ENCODE measurements at regions of chr3 and their contacts with region 1.

Region 1: DNA sequence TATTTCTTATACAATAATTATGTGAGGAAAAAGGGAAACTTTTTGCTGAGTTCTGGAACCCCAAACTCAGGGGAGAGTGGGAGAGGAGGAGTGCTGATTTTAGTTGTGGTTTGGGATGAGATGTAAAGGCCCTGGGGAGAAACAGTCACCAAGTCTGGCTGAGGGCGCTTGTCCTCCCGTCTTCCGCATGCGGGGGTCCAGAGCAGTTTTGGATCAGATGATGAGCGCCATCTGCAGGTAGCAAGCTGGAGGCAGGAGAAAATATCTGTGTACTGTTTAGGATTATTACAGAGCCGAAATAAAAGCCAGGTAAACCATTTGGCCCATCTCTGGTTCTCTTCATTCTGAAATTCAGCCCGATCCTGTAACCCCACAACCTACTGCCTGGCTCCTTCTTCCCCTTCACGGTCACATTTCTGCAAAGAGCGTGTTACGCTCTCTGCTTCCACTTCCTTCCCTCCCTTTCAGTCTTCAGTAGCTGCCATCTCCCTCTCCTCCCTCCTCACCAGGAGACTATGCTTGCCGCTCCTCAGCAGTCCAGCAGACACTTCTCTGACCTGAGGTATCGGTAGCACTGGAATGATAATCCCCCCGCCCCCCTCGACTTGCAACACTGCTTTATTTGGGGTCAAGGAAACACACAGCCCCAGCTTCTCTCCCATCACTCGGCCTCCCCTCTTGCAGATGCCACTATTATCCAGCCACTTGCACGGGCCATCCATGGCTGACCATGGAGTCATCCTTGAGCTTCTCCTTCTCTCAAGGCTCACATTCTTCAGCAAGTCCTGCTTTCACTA is 1.4 kb upstream of the PARP14 start:
- DNase-seq: peak; percentile 91
- ATAC-seq: peak; percentile 69
- H3K4me3 Mint-ChIP-seq: peak overlapping the region; percentile 95
- H3K27ac Mint-ChIP-seq: peak overlapping the region; percentile 97
- H3K4me1 Mint-ChIP-seq: peaks cover 51% of the 10 kb centered on the region
- H3K27me3 Mint-ChIP-seq: no peaks in the 10 kb centered on the region

Region 2: GRCh38 chr3:122383771-122384697 is 295.2 kb before region 1 on chr3 and contains the start of gene FAM162A:
- CTCF ChIA-PET with region 1: interaction called, 6 read pairs
- POLR2A ChIA-PET with region 1: no interaction called
- intact Hi-C with region 1: loop called (anchors 2 kb)
- DNase-seq: peak; percentile 97
- ATAC-seq: peak; percentile 91
- H3K4me3 Mint-ChIP-seq: peak within 1 kb of the TSS; percentile 92
- H3K27ac Mint-ChIP-seq: peak within 1 kb of the TSS; percentile 98
- H3K4me1 Mint-ChIP-seq: peaks cover 66% of the 10 kb centered on the region
- H3K27me3 Mint-ChIP-seq: no peaks in the 10 kb centered on the region
- total RNA-seq, gene FAM162A: 163 to 181 TPM

Region 3: GRCh38 chr3:122458992-122459391 is 220.3 kb before region 1 on chr3:
- CTCF ChIA-PET with region 1: interaction called, 11 read pairs
- POLR2A ChIA-PET with region 1: no interaction called
- intact Hi-C with region 1: loop called in 1 of 2 experiments (anchors 1 kb)
- DNase-seq: no peak
- ATAC-seq: no peak
- H3K4me3 Mint-ChIP-seq: no peak overlapping the region
- H3K27ac Mint-ChIP-seq: peak overlapping the region; percentile 29
- H3K4me1 Mint-ChIP-seq: peaks cover 6% of the 10 kb centered on the region
- H3K27me3 Mint-ChIP-seq: no peaks in the 10 kb centered on the region

Region 4: DNA sequence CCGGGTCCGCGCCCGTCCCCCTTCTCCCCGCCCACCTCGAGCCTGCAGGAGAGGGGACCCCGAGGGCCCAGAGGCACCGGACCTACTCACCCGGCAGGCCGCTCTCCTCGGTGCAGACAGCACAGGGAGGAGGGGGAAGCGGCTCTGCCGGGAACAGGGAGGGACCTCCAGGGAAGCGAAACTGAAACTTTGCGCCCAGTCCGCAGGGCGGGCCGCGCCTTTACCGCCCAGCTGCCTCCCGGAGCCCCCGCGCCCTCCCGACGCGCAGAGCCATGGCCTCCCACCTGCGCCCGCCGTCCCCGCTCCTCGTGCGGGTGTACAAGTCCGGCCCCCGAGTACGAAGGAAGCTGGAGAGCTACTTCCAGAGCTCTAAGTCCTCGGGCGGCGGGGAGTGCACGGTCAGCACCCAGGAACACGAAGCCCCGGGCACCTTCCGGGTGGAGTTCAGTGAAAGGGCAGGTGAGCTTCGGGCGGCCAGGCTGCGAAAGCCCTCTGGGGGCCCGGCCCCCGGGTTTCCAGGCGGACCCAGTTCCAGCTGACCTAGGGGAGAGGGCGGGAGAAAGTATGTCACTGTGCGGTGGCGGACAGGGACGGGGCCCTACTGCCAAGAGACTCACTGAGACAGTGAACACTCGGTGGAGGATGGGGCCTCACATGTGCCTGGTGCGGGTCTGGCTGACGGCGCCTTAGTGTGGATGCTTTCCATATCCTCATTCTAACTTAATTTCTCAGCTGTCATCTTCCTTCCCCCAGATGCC is 114.9 kb before region 1 on chr3 and contains the starts of genes DTX3L and PARP9:
- CTCF ChIA-PET with region 1: interaction called, 58 read pairs
- POLR2A ChIA-PET with region 1: interaction called, 4 read pairs
- intact Hi-C with region 1: loop called (anchors 1 kb)
- DNase-seq: peak; percentile 89
- ATAC-seq: peak; percentile 83
- H3K4me3 Mint-ChIP-seq: peak within 1 kb of the TSS; percentile 83
- H3K27ac Mint-ChIP-seq: peak within 1 kb of the TSS; percentile 97
- H3K4me1 Mint-ChIP-seq: peaks cover 67% of the 10 kb centered on the region
- H3K27me3 Mint-ChIP-seq: no peaks in the 10 kb centered on the region
- total RNA-seq, gene DTX3L: 42.0 to 52.0 TPM
- total RNA-seq, gene PARP9: 39.9 to 46.0 TPM

Region 5: GRCh38 chr3:122668930-122669730 is 10.2 kb before region 1 on chr3:
- CTCF ChIA-PET with region 1: interaction called, 21 read pairs
- POLR2A ChIA-PET with region 1: no interaction called
- intact Hi-C with region 1: loop called in 1 of 2 experiments (anchors 1 kb)
- DNase-seq: peak; percentile 62
- ATAC-seq: peak; percentile 98
- H3K4me3 Mint-ChIP-seq: no peak overlapping the region
- H3K27ac Mint-ChIP-seq: peak overlapping the region; percentile 69
- H3K4me1 Mint-ChIP-seq: peaks cover 15% of the 10 kb centered on the region
- H3K27me3 Mint-ChIP-seq: no peaks in the 10 kb centered on the region

Region 6: GRCh38 chr3:122739172-122739571 is 59.9 kb after region 1 on chr3:
- CTCF ChIA-PET with region 1: no interaction called
- POLR2A ChIA-PET with region 1: no interaction called
- intact Hi-C with region 1: no loop called
- DNase-seq: no peak
- ATAC-seq: no peak
- H3K4me3 Mint-ChIP-seq: no peak overlapping the region
- H3K27ac Mint-ChIP-seq: no peak overlapping the region
- H3K4me1 Mint-ChIP-seq: no peaks in the 10 kb centered on the region
- H3K27me3 Mint-ChIP-seq: no peaks in the 10 kb centered on the region

Region 7: DNA sequence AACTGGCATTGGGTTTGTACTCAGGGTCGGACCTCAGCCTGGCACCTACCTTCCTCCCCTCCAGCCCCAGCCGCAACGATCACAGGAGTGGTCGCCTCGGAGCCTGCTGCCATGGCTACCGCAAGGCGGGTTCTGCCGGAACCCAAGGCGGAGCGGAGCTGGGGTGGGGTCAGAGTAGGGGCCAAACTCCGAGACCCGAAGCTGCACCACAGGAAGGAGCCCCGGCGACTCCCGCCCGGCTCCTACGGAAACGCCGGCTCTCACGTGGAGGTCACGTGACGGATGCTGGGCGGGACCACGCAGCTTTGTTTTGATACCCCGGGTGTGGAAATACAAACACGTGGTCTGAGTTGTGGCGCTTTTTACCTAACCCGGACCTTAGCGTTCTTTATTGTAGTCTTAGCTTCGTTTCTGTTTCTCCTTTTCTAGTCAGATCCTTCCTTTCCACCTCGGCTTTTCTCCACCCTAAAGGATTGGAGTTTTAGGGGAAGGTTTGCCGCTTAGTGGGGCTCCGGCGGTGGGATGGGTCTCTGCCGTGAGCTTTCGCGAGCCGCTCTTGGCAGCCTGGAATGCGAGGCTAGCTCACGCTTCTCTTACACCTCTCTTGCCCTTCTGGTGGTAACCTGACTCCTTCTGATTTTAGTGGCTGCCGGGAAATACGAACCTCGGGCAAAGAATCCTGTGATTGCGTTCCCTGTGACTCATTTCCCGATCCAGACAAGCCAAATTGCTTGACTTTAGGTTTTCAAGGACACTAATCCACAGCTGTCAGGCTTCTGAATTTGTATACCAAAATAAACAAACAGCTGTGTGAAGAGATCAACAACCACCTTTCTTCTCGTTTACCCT is 114.5 kb after region 1 on chr3 and contains the start of gene HSPBAP1:
- CTCF ChIA-PET with region 1: no interaction called
- POLR2A ChIA-PET with region 1: interaction called, 3 read pairs
- intact Hi-C with region 1: loop called in 1 of 2 experiments (anchors 2 kb)
- DNase-seq: peak; percentile 93
- ATAC-seq: peak; percentile 67
- H3K4me3 Mint-ChIP-seq: no peak within 1 kb of the TSS
- H3K27ac Mint-ChIP-seq: peak within 1 kb of the TSS; percentile 86
- H3K4me1 Mint-ChIP-seq: peaks cover 32% of the 10 kb centered on the region
- H3K27me3 Mint-ChIP-seq: no peaks in the 10 kb centered on the region
- total RNA-seq, gene HSPBAP1: 3.9 to 4.4 TPM

Measured in activated CD4-positive, alpha-beta T cell treated with anti-CD3 and anti-CD28 coated beads for 36 hours (primary cell).